ENCODE measurements at regions of chr6 and their contacts with region 1.

Region 1: DNA sequence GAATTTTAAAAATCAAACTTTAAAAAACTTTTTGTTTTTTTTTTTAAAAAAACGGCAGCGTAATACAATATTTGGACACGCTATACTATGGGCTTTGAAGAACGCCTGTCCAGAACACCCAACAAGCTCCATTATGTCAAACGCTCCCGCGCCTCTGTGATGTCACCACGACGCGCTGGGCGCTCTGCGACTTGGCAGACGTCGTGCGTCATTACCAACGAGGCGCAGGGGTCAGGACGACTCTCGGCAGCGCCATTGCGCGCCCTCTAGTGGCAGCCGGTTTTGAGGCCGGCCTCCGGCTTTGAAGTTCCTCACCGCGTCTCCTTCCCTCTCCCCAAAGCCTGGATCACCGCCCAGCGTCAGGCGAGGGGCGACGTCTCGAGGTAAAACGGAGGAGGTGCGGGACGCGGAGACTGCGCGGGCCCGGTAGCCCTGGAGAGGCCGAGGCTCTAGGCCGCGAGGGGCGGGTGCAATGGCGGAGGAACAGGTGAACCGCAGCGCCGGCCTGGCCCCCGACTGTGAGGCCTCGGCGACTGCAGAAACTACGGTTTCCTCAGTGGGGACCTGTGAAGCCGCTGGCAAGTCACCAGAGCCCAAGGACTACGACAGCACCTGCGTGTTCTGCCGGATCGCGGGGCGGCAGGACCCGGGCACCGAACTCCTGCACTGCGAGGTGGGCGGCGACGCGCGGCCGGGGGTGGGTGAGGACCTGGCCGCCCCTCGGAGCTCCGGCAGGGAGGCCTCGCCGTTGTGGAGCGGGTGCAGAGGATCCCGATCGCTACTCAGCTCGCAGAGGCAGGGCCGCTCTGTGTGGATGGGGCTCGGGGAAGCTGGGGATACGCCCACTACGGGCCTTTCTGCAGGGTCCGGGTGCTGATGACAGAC is at the start of gene HINT3:
- DNase-seq: peak; percentile 97 to 98
- H3K4me3 ChIP-seq: peak within 1 kb of the TSS; percentile 66 to 90 (median 89)
- H3K27ac ChIP-seq: peak within 1 kb of the TSS; percentile 93 to 97 (median 97)
- H3K4me1 ChIP-seq: peaks cover 0 to 13% of the 10 kb centered on the region in 2 donors
- H3K27me3 ChIP-seq: no peaks in the 10 kb centered on the region
- CTCF ChIP-seq: peak; percentile 88 to 98 (median 97)
- POLR2A ChIP-seq: peak; percentile 43 to 64
- total RNA-seq, gene HINT3: 21.5 to 32.5 (median 26.3) TPM

Region 2: DNA sequence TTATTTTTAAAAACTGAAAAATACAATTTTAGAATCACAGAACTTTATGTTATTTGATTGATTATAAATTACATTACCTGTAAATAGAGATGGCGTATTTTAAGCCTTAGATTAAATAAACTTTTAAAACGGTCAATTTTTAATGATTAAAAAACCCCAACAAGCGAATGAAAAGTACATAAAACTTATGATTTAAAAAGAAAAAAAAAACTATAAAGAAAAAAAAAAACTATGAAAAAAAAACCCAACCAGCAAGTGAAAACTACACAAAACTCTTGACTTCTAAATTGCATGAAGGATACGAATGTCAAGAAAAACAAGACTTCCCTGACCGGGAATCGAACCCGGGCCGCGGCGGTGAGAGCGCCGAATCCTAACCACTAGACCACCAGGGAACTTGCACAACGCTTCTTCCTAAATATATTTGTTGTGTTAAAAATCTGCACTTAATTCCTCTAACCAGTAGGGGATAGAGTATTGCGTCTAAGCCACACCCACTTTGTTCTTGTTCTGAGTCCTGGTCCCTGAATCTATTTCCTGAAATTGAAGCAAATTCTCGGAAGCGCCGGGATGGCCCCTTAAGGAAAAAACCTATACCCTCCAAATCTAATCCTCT is 176.7 kb before region 1 on chr6:
- intact Hi-C with region 1: loop called (anchors 10 kb)
- DNase-seq: peak; percentile 85 to 88
- H3K4me3 ChIP-seq: peak overlapping the region; percentile 29 to 43 (median 35)
- H3K27ac ChIP-seq: peak overlapping the region; percentile 87 to 94 (median 91)
- H3K4me1 ChIP-seq: no peaks in the 10 kb centered on the region
- H3K27me3 ChIP-seq: no peaks in the 10 kb centered on the region
- CTCF ChIP-seq: peak in 4 of 6 experiments; percentile 29 to 58 (median 50)
- POLR2A ChIP-seq: peak in 1 of 2 donors; percentile 60

Region 3: GRCh38 chr6:125858427-125859320 is 98.1 kb before region 1 on chr6:
- intact Hi-C with region 1: loop called (anchors 10 kb)
- DNase-seq: peak; percentile 61 to 62
- H3K4me3 ChIP-seq: no peak overlapping the region
- H3K27ac ChIP-seq: no peak overlapping the region
- H3K4me1 ChIP-seq: peaks cover 0 to 7% of the 10 kb centered on the region in 2 donors
- H3K27me3 ChIP-seq: no peaks in the 10 kb centered on the region
- CTCF ChIP-seq: peak in 4 of 6 experiments; percentile 59 to 79 (median 73)
- POLR2A ChIP-seq: no peak

Region 4: DNA sequence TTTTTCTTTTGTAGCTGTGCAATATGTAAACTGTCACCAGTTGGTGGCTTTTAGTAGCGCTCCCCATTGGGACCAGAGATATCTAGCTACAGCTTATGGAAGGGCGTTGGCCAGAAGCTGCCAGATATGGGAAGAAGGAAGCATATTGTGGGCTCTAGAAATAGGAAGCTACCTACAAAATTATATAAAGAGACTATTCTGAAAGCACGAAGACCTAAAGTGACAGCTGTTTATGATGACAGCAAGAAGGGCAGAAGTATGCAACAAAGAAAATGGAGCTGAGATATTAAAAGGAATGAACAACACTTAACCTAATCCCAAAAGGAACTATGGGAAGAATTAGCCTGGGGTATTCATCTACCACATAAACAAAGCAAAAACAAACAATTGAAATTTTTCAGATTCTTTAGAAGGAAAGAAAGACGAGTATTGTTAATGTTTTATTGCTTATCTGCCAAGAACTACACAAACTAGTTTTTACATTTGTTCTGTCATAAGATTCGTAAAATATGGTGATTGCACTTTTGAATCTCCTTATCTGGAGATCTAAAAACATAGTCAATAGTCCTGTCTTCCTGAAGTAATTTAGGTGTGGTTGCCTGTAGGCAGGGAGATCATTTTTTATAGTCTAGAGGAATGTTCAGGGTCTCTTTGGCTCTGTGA is 84.4 kb before region 1 on chr6:
- intact Hi-C with region 1: no loop called
- DNase-seq: no peak
- H3K4me3 ChIP-seq: no peak overlapping the region
- H3K27ac ChIP-seq: no peak overlapping the region
- H3K4me1 ChIP-seq: peaks cover 0 to 6% of the 10 kb centered on the region in 2 donors
- H3K27me3 ChIP-seq: no peaks in the 10 kb centered on the region
- CTCF ChIP-seq: no peak
- POLR2A ChIP-seq: no peak

Region 5: GRCh38 chr6:125888989-125889656 is 67.6 kb before region 1 on chr6:
- intact Hi-C with region 1: no loop called
- DNase-seq: peak in 1 of 2 donors; percentile 17
- H3K4me3 ChIP-seq: no peak overlapping the region
- H3K27ac ChIP-seq: no peak overlapping the region
- H3K4me1 ChIP-seq: no peaks in the 10 kb centered on the region
- H3K27me3 ChIP-seq: no peaks in the 10 kb centered on the region
- CTCF ChIP-seq: peak in 5 of 6 experiments; percentile 14 to 46 (median 31)
- POLR2A ChIP-seq: no peak

Region 6: DNA sequence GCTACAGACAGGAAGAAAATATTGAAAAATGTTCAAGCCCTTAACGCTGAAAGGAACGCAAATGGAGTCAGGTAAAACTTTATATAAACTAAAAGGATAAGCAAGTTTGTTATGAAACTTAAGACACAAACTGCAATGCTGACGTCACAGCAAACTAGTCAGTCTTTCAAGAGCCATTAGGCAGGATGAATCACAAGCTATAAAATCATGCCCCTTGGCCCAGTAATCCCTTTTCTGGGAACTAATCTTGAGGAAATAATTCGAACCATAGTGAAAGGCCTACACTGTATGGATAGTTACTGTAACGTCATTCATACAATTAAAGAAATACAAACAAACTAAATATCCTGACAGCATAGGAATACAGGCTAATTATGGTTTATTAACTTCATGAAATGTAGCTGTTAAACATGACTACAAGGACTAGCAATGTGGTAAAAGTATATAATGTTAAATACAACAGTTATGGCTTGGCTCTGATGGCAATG is 42.8 kb before region 1 on chr6:
- intact Hi-C with region 1: no loop called
- DNase-seq: no peak
- H3K4me3 ChIP-seq: no peak overlapping the region
- H3K27ac ChIP-seq: no peak overlapping the region
- H3K4me1 ChIP-seq: peaks cover 5 to 7% of the 10 kb centered on the region in 2 donors
- H3K27me3 ChIP-seq: no peaks in the 10 kb centered on the region
- CTCF ChIP-seq: no peak
- POLR2A ChIP-seq: no peak

Region 7: DNA sequence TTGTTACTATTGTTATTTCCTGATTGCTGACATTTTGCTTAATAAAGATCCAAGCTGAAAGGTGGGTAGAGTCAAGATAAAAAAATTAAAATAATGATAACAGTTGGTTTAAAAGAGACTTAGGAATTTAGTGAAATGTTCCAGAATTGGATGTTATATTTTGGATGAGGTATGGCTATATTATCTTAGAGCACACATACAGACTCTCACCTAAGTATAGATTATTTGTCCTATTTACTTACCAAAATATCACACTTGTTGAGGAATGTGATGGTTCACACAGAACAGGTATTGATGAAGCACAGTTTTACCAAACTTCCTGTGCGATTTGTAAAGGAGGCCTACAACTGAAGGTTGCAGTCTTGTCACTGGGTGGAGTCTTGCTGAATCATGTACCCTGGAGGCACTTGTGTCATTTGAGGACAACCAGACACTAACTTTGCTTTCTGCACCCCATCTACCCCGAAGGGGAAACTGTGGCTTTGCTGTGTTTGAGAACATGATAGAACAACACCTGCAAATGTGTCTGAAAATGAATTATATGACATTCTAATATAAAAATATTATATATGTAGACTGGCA is 32.7 kb before region 1 on chr6:
- intact Hi-C with region 1: loop called (anchors 5 kb)
- DNase-seq: no peak
- H3K4me3 ChIP-seq: no peak overlapping the region
- H3K27ac ChIP-seq: no peak overlapping the region
- H3K4me1 ChIP-seq: peaks cover 0 to 11% of the 10 kb centered on the region in 2 donors
- H3K27me3 ChIP-seq: no peaks in the 10 kb centered on the region
- CTCF ChIP-seq: no peak
- POLR2A ChIP-seq: no peak